ENCODE measurements at regions of chr5 and their contacts with region 1.

Region 1: GRCh38 chr5:115180165-115180709 is 10.5 kb upstream of the TRIM36 start:
- DNase-seq: no peak
- H3K4me3 Mint-ChIP-seq: peak overlapping the region; percentile 80
- H3K27ac Mint-ChIP-seq: no peak overlapping the region
- H3K4me1 Mint-ChIP-seq: peaks cover 8% of the 10 kb centered on the region
- H3K27me3 Mint-ChIP-seq: peaks cover 83% of the 10 kb centered on the region

Region 2: DNA sequence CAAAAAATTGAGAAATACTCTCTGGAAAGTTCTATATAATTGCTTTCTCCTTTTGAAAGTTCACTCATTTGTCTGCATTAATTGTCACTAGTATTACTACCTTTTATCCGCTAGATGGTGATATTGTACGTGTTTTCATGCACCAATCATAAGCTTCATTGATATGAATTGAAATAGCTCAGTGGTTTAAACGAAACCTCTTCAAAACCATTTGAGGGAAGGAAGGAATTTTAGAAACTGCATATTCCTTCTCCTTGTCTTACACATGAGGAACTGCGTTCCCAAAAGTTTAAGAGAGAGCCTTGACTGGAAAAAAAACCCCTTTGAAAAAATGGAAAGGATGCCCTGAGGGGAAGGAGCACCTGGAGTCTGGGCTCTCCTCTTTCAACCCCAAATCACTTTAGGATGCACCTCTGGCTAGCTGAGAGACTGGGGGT is 1568.2 kb before region 1 on chr5:
- intact Hi-C with region 1: no loop called
- DNase-seq: no peak
- H3K4me3 Mint-ChIP-seq: no peak overlapping the region
- H3K27ac Mint-ChIP-seq: no peak overlapping the region
- H3K4me1 Mint-ChIP-seq: peaks cover 6% of the 10 kb centered on the region
- H3K27me3 Mint-ChIP-seq: peaks cover 19% of the 10 kb centered on the region

Region 3: DNA sequence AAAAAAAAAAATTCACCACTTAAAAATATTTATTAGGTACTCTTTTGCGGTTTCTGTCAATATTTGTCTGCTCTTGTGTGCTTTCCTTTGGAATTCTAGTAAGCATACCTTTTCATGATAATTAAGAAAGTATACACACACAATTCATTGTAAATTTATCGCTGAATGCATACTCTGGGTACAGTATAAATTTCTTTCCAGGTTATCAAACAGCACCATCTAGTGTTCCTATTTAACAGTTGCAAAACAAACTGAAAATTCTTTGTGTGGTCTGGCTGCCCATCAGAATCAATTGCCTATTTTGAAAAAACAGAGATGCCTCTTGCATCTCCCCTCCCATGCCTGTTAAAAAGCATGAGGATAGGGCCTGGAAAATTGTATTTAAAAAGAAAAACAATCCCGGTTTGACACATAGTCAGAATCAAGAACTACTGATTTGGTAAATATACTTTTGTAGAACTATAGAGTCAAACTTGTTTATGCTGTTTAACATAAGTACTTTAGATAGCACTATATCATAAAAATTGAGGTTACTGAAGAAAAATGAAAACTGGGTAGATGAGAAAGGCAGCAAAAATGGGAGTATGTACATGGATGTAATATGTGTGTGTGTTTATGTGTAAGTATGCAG is 66.2 kb after region 1 on chr5:
- intact Hi-C with region 1: loop called (anchors 5 kb)
- DNase-seq: no peak
- H3K4me3 Mint-ChIP-seq: no peak overlapping the region
- H3K27ac Mint-ChIP-seq: no peak overlapping the region
- H3K4me1 Mint-ChIP-seq: peaks cover 12% of the 10 kb centered on the region
- H3K27me3 Mint-ChIP-seq: no peaks in the 10 kb centered on the region

Region 4: GRCh38 chr5:115625579-115626444 is 445.6 kb after region 1 on chr5 and contains the start of gene TMED7:
- intact Hi-C with region 1: no loop called
- DNase-seq: peak; percentile 98
- H3K4me3 Mint-ChIP-seq: no peak within 1 kb of the TSS
- H3K27ac Mint-ChIP-seq: peak within 1 kb of the TSS; percentile 89
- H3K4me1 Mint-ChIP-seq: peaks cover 20% of the 10 kb centered on the region
- H3K27me3 Mint-ChIP-seq: peaks cover 13% of the 10 kb centered on the region
- total RNA-seq, gene TMED7: 40.2 and 40.9 TPM in 2 replicates